ENCODE measurements at regions of chr12 and their contacts with region 1.

Region 1: DNA sequence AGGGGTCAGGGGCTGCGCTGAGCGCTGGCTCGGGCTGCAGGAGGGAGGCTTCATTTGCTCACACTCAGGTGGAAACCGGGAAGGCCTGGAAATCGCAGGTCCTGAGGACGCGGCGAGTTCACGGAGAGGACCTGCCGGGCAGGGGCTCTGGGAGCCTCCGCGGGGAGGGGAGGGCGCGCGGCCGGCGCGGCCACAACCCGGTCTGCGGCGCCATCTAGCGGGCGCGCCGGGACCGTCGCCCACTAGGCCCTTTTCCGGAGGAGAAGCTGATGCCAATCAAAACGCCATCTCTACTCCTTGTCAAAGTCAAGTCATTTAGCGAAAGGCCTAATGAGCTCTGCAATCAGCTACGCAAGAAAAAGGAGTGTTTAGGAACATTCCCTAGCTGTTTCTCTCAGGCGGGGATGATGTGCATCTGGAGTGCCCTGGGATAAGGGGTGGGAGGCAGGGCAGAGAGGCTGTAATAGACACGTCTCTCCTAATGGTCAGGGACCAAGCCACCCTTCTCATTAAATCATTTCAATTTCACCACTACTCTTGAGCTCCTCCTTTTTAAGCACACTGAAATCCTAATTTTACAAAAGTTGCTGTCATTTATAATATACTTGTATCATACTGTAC is 885.8 kb upstream of the TMEM132C start:
- DNase-seq: peak; percentile 72
- H3K4me3 Mint-ChIP-seq: peak overlapping the region; percentile 56
- H3K27ac Mint-ChIP-seq: no peak overlapping the region
- H3K4me1 Mint-ChIP-seq: no peaks in the 10 kb centered on the region
- H3K27me3 Mint-ChIP-seq: no peaks in the 10 kb centered on the region
- CTCF ChIP-seq: peak; percentile 70

Region 2: GRCh38 chr12:126069549-126070165 is 1311.5 kb before region 1 on chr12:
- CTCF ChIA-PET with region 1: no interaction called
- intact Hi-C with region 1: loop called (anchors 10 kb)
- DNase-seq: peak; percentile 82
- H3K4me3 Mint-ChIP-seq: no peak overlapping the region
- H3K27ac Mint-ChIP-seq: no peak overlapping the region
- H3K4me1 Mint-ChIP-seq: peaks cover 9% of the 10 kb centered on the region
- H3K27me3 Mint-ChIP-seq: no peaks in the 10 kb centered on the region
- CTCF ChIP-seq: peak; percentile 77

Region 3: DNA sequence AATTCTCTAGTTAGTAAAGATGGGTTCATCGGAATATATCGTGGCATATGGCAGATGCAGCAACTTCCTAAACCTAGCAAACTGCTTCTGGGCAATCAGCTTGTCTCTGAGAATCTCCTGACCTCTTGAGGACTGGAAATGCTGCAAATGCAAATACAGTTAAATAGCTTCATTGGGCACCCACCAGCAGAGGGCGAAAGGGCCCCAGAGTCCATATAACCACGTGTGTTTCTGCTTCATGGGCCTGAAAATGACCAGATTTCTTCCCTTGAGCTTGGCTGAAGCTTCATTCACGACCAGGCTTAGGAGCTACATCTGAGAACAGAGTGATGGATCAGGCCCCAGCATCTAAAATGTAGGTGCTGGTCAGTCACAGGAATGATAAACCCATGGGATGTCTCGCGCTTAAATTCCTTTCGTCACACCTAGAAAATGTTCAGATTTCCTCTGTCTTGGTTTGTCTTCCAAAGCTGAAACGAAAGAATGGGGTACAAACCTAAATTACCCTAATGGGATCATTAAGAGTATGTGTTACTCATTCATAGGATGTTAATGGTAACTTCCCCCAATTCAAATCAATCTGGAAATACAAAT is 596.7 kb before region 1 on chr12:
- CTCF ChIA-PET with region 1: no interaction called
- intact Hi-C with region 1: loop called (anchors 1 kb)
- DNase-seq: peak; percentile 73
- H3K4me3 Mint-ChIP-seq: no peak overlapping the region
- H3K27ac Mint-ChIP-seq: no peak overlapping the region
- H3K4me1 Mint-ChIP-seq: peaks cover 7% of the 10 kb centered on the region
- H3K27me3 Mint-ChIP-seq: no peaks in the 10 kb centered on the region
- CTCF ChIP-seq: peak; percentile 64

Region 4: GRCh38 chr12:127108360-127109215 is 272.6 kb before region 1 on chr12:
- CTCF ChIA-PET with region 1: interaction called, 8 read pairs
- intact Hi-C with region 1: loop called (anchors 1 kb)
- DNase-seq: peak; percentile 64
- H3K4me3 Mint-ChIP-seq: no peak overlapping the region
- H3K27ac Mint-ChIP-seq: no peak overlapping the region
- H3K4me1 Mint-ChIP-seq: no peaks in the 10 kb centered on the region
- H3K27me3 Mint-ChIP-seq: no peaks in the 10 kb centered on the region
- CTCF ChIP-seq: peak; percentile 53

Region 5: GRCh38 chr12:127677537-127678131 is 296.5 kb after region 1 on chr12:
- CTCF ChIA-PET with region 1: interaction called, 6 read pairs
- intact Hi-C with region 1: loop called (anchors 10 kb)
- DNase-seq: peak; percentile 67
- H3K4me3 Mint-ChIP-seq: no peak overlapping the region
- H3K27ac Mint-ChIP-seq: no peak overlapping the region
- H3K4me1 Mint-ChIP-seq: no peaks in the 10 kb centered on the region
- H3K27me3 Mint-ChIP-seq: no peaks in the 10 kb centered on the region
- CTCF ChIP-seq: peak; percentile 57